ENCODE measurements at regions of chr9 and their contacts with region 1.

Region 1: GRCh38 chr9:19456996-19457692 is 48.3 kb downstream of the ACER2 start:
- DNase-seq: peak; percentile 93
- H3K4me3 ChIP-seq: peak overlapping the region in 2 of 4 donors; percentile 20 to 31
- H3K27ac ChIP-seq: peak overlapping the region in 3 of 4 donors; percentile 6 to 30 (median 28)
- H3K4me1 ChIP-seq: peaks cover 4 to 13% (median 10%) of the 10 kb centered on the region in 4 donors
- H3K27me3 ChIP-seq: no peaks in the 10 kb centered on the region
- CTCF ChIP-seq: peak; percentile 94 to 100 (median 95)
- EP300 ChIP-seq: no peak
- POLR2A ChIP-seq: no peak

Region 2: DNA sequence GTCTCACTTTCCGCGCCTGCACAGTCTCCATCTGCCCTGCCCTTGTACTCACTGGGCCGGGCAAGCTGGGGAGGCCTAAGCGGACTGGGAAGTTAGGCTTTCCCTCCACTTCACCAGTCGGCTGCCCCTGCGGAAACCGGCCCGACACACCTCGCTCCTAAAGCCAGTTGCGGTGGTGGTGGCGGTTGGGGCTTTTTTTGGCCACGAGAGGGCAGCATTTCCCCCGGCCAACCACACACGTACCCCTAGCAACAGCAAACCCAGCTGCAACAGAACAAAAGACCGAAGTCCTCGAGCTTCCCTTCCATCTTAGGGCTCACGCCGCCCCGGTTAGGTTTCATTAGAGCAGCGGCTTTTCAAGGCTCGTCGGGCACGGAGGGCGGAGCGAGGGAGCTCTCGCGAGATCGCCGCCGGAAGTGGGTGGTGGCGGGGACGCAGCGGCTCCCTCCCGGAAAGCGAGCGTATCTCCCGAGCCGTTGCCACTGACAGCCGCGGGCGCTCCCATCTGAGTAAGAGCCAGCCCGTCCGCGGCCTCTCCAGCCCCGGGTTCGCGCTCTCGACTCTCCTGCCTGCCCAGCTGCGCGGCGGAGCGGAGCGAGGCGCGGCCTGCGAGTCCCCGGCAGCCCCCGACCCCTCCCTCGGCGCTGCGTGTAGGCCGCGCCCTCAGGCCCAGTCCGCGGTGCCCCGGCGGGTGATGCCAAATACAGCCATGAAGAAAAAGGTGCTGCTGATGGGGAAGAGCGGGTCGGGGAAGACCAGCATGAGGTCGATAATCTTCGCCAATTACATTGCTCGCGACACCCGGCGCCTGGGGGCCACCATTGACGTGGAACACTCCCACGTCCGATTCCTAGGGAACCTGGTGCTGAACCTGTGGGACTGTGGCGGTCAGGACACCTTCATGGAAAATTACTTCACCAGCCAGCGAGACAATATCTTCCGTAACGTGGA is 407.9 kb before region 1 on chr9 and contains the start of gene RRAGA:
- intact Hi-C with region 1: loop called (anchors 5 kb)
- DNase-seq: peak; percentile 98
- H3K4me3 ChIP-seq: peak within 1 kb of the TSS; percentile 76 to 95 (median 86)
- H3K27ac ChIP-seq: peak within 1 kb of the TSS; percentile 92 to 99 (median 96)
- H3K4me1 ChIP-seq: peaks cover 23 to 46% (median 41%) of the 10 kb centered on the region in 4 donors
- H3K27me3 ChIP-seq: no peaks in the 10 kb centered on the region
- CTCF ChIP-seq: peak; percentile 75 to 88 (median 83)
- EP300 ChIP-seq: no peak
- POLR2A ChIP-seq: peak; percentile 79
- total RNA-seq, gene RRAGA: 51.0 to 94.3 (median 70.0) TPM

Region 3: DNA sequence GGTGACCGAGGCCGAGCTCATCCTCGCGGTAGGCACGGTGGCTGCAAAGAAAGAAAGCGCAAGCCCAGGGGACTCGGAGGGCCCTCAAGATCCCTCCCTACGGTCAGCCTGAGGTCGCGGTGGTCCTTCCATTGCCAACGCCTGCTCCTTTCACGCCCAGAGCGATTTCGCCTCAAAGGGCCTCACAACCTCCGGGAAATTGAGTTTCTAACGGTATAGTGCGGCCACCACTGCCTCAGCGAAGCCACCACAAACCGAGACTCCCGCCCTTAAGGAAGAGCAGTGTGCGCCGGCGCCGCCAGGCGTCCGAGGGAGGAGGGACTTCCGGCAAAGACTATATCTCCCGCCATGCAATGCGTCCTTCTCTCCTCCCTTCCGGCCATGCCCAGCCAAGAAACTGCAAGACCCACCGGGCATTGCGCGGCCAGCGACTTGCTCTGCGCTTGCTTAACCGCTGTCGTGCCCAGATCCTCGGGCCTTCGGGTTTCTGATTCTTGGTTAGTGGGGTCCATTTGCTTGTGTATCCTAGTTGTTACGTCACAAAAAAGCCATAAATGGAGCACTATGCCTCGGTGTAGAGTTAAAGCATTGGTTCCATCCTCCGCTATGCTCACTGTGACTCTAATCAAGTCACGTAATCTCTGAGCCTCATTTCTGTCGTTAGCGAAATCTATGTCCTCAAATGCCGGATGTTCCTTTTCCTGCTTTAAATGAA is 354.4 kb before region 1 on chr9 and contains the start of gene HAUS6:
- intact Hi-C with region 1: loop called (anchors 10 kb)
- DNase-seq: peak; percentile 99
- H3K4me3 ChIP-seq: peak within 1 kb of the TSS; percentile 72 to 87 (median 76)
- H3K27ac ChIP-seq: peak within 1 kb of the TSS; percentile 83 to 91 (median 86)
- H3K4me1 ChIP-seq: peaks cover 13 to 32% (median 23%) of the 10 kb centered on the region in 4 donors
- H3K27me3 ChIP-seq: no peaks in the 10 kb centered on the region
- CTCF ChIP-seq: peak; percentile 24 to 66 (median 58)
- EP300 ChIP-seq: no peak
- POLR2A ChIP-seq: peak; percentile 52
- total RNA-seq, gene HAUS6: 7.1 to 8.7 (median 7.3) TPM

Region 4: GRCh38 chr9:19174127-19174912 is 282.8 kb before region 1 on chr9:
- intact Hi-C with region 1: loop called (anchors 10 kb)
- DNase-seq: no peak
- H3K4me3 ChIP-seq: no peak overlapping the region
- H3K27ac ChIP-seq: no peak overlapping the region
- H3K4me1 ChIP-seq: peaks cover 8 to 12% (median 10%) of the 10 kb centered on the region in 4 donors
- H3K27me3 ChIP-seq: no peaks in the 10 kb centered on the region
- CTCF ChIP-seq: peak; percentile 51 to 61 (median 56)
- EP300 ChIP-seq: no peak
- POLR2A ChIP-seq: no peak

Region 5: GRCh38 chr9:19379697-19380046 is 77.5 kb before region 1 on chr9:
- intact Hi-C with region 1: loop called (anchors 2 kb)
- DNase-seq: no peak
- H3K4me3 ChIP-seq: peak overlapping the region; percentile 59 to 85 (median 76)
- H3K27ac ChIP-seq: peak overlapping the region; percentile 92 to 95 (median 94)
- H3K4me1 ChIP-seq: peaks cover 22 to 32% (median 31%) of the 10 kb centered on the region in 4 donors
- H3K27me3 ChIP-seq: no peaks in the 10 kb centered on the region
- CTCF ChIP-seq: no peak
- EP300 ChIP-seq: no peak
- POLR2A ChIP-seq: no peak

Region 6: DNA sequence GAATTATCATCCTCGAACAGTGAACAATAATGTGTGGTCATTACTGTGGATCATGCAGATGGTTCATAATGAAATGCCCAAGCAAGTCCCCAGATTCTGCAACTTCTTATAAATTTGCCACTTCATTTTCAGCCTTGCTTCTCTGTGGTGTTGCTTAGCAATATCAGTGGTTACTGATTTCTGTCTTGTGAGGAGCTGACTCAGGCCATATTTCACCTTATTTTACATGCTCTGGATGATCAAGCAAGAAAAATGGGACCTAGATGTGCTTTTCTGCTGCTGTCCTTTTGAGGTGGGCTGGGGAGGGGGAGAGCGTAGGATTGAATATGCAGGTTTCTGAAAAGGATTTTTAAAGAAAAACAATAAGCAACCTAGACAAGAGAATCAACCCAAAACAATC is 143.4 kb after region 1 on chr9:
- intact Hi-C with region 1: no loop called
- DNase-seq: peak; percentile 57
- H3K4me3 ChIP-seq: no peak overlapping the region
- H3K27ac ChIP-seq: no peak overlapping the region
- H3K4me1 ChIP-seq: no peaks in the 10 kb centered on the region
- H3K27me3 ChIP-seq: no peaks in the 10 kb centered on the region
- CTCF ChIP-seq: no peak
- EP300 ChIP-seq: no peak
- POLR2A ChIP-seq: no peak

Measured in esophagus muscularis mucosa (tissue), 4 donors.